CD8-positive, alpha-beta memory T cell (primary cell): ENCODE measurements at regions of chr22 and their contacts with region 1.

Region 1: GRCh38 chr22:22884010-22884887 is 3.4 kb upstream of the IGLL5 start:
- DNase-seq: peak; percentile 44 to 81 (median 70)
- H3K4me3 ChIP-seq: no peak overlapping the region
- H3K4me3 Mint-ChIP-seq: no peak overlapping the region
- H3K27ac ChIP-seq: no peak overlapping the region
- H3K27ac Mint-ChIP-seq: peak overlapping the region in 4 of 8 donors; percentile 4 to 77 (median 40)
- H3K4me1 ChIP-seq: no peaks in the 10 kb centered on the region
- H3K4me1 Mint-ChIP-seq: peaks cover 8 to 14% (median 13%) of the 10 kb centered on the region in 3 donors
- H3K27me3 ChIP-seq: no peaks in the 10 kb centered on the region
- H3K27me3 Mint-ChIP-seq: peaks cover 2 to 6% of the 10 kb centered on the region in 2 donors

Region 2: DNA sequence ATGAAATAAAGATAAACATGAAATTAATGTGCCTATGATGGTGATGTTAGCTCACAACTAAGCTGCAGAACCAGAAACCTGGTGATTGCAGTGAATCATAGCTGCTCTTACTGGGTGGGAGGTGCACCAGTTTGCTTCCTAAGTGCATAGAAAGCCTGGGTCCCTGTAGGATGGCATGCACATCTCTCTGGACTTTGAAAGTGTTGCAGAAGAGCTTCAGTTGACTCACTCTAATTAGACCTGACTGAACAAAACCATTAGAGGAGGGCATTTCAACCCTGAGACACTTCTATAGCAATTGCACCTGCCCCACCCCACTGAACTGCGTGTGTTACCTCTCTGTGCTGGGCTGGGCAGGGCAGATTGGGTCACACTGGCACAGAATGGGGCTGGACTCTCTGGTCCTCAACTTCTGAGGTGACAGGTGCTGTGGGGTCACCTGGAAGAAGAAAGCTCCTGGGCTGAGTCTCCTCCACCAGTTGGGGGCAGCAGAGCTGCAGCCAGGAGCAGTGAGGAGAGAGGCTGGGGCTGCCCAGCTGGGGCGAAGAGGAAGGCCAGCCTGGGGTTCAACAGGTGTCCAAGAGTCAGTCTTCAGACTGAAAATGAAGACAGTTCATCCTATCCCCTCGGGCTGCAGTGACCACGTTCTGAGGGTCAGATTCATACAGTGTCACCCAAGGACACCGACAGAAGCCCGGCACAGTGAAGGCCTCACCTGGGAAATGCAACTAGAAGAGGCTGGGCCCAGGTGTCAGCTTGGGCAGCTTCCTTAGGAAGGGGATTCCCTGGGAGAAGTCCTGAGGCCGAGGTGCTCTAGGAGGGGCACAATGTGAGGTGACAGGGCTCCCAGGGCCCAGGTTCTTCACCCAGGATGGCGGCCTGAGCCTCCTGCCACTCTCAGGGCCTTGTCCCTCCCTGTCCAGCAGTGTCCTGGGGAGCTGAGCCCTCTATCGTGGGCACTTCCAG is 181.7 kb before region 1 on chr22:
- CTCF ChIA-PET with region 1: interaction called, 47 read pairs
- POLR2A ChIA-PET with region 1: no interaction called
- DNase-seq: no peak
- H3K4me3 ChIP-seq: no peak overlapping the region
- H3K4me3 Mint-ChIP-seq: no peak overlapping the region
- H3K27ac ChIP-seq: no peak overlapping the region
- H3K27ac Mint-ChIP-seq: no peak overlapping the region
- H3K4me1 ChIP-seq: no peaks in the 10 kb centered on the region
- H3K4me1 Mint-ChIP-seq: no peaks in the 10 kb centered on the region
- H3K27me3 ChIP-seq: no peaks in the 10 kb centered on the region
- H3K27me3 Mint-ChIP-seq: peaks cover 2 to 9% of the 10 kb centered on the region in 2 donors

Region 3: GRCh38 chr22:22748297-22748743 is 135.9 kb before region 1 on chr22:
- CTCF ChIA-PET with region 1: interaction called, 178 read pairs
- POLR2A ChIA-PET with region 1: interaction called, 7 read pairs
- DNase-seq: peak in 2 of 5 donors; percentile 27 to 66
- H3K4me3 ChIP-seq: no peak overlapping the region
- H3K4me3 Mint-ChIP-seq: peak overlapping the region in 4 of 7 donors; percentile 33 to 59 (median 54)
- H3K27ac ChIP-seq: no peak overlapping the region
- H3K27ac Mint-ChIP-seq: peak overlapping the region in 7 of 8 donors; percentile 6 to 87 (median 67)
- H3K4me1 ChIP-seq: peaks cover 16% of the 10 kb centered on the region
- H3K4me1 Mint-ChIP-seq: peaks cover 56 to 62% (median 57%) of the 10 kb centered on the region in 3 donors
- H3K27me3 ChIP-seq: no peaks in the 10 kb centered on the region
- H3K27me3 Mint-ChIP-seq: peaks cover 2 to 3% of the 10 kb centered on the region in 2 donors

Region 4: DNA sequence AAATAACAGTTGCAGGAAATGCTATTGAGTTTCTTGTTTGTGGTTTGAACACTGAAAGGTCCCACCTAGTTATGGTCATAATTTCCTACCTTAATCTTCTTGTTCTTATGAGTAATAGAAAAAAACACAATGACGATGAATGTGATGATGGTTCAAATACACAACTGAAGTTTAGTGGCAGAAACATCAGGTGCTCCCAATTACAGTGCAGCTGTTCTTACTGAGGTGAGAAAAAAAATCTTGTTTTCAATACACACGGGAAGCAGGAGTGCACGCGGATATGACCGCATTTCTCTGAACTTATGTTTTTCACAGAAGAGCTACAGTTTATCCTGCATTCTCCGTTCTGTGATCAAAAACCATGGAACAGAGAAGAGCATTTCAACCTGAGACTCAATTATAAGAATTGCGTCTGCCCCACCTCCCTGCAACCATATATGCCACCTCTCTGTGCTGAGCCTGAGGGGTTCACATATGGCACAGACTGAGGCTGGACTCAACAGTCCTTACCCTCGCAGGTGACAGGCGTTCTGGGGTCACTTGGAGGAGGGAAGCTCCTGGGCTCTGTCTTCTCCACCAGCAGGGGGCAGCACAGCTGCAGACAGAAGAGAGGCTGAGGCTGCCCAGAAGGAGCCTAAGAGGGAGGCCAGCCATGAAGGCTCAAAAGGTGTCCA is 96.3 kb before region 1 on chr22:
- CTCF ChIA-PET with region 1: interaction called, 59 read pairs
- POLR2A ChIA-PET with region 1: interaction called, 7 read pairs
- DNase-seq: peak; percentile 46 to 84 (median 57)
- H3K4me3 ChIP-seq: no peak overlapping the region
- H3K4me3 Mint-ChIP-seq: peak overlapping the region; percentile 22 to 83 (median 52)
- H3K27ac ChIP-seq: peak overlapping the region; percentile 38
- H3K27ac Mint-ChIP-seq: peak overlapping the region; percentile 78 to 99 (median 90)
- H3K4me1 ChIP-seq: peaks cover 57% of the 10 kb centered on the region
- H3K4me1 Mint-ChIP-seq: peaks cover 79 to 92% (median 80%) of the 10 kb centered on the region in 3 donors
- H3K27me3 ChIP-seq: no peaks in the 10 kb centered on the region
- H3K27me3 Mint-ChIP-seq: no peaks in the 10 kb centered on the region

Region 5: DNA sequence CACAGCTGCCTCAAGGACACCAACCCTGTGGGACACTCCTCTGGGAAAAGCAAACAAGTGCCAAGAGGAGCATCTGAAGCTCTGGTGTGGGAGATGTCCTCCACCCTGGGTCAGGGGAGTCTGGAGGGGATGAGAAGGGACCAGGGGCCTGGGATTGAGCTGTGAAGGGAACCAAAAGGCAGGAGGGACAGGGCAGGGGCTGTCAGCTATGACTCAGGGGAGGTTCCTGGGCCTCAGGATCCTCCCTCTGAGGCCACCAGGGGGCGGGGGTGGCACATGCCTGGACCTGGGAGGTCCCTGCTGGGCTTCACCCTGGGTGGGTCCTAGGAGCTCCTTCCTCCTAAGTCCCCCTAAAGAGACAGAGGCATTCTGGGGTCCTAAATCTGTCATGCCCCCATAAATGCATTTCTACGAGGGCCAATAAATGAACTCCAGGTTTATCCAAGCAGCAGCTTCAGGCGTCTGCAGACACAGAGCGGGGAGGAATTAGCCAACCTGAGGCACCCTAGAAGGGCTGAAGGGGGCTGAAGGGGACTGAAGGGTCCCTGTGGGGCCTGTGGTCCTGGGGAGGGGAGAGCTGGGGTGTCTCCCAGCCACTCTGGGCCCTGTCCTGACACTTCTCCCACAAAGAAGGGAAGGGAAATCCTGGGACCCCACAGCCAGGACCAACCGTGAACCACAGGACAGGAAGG is 28.5 kb before region 1 on chr22:
- CTCF ChIA-PET with region 1: interaction called, 46 read pairs
- POLR2A ChIA-PET with region 1: no interaction called
- DNase-seq: peak; percentile 5 to 65 (median 21)
- H3K4me3 ChIP-seq: no peak overlapping the region
- H3K4me3 Mint-ChIP-seq: no peak overlapping the region
- H3K27ac ChIP-seq: no peak overlapping the region
- H3K27ac Mint-ChIP-seq: peak overlapping the region in 4 of 8 donors; percentile 42 to 74 (median 64)
- H3K4me1 ChIP-seq: no peaks in the 10 kb centered on the region
- H3K4me1 Mint-ChIP-seq: peaks cover 14 to 31% (median 17%) of the 10 kb centered on the region in 3 donors
- H3K27me3 ChIP-seq: no peaks in the 10 kb centered on the region
- H3K27me3 Mint-ChIP-seq: peaks cover 0 to 2% of the 10 kb centered on the region in 2 donors